Left lung (tissue), 14 donors: ENCODE measurements at regions of chr7 and their contacts with region 1.

Region 1: DNA sequence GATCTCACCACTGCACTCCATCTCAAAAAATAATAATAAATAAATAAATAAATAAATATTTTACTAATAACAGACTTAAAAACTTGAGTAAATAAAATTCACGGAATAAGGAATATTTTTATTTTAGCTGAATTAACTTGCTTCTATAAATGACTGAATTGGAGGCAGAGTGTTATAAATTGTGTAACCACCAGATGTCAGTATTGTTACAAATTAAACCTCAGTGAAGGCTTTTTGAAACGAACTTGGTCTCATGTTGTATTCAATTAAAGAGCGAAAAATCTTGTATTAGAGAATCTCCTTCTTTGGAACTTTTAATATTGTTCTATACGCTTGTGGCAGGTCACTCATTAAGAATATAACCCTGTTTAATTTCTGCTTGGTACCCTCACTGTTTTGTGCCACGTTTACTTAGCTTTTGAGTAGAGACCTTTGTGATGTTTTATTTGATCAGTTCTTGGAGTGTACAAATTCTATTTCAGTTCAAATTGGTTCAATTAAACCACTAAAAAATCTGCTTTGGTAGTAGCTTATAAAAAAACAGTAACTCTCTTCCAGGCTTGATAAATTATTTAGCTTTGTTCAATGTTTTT is 45.6 kb upstream of the SCIN start:
- DNase-seq: peak in 2 of 4 donors; percentile 35 to 48
- ATAC-seq: peak; percentile 68
- H3K4me3 ChIP-seq: no peak overlapping the region
- H3K27ac ChIP-seq: no peak overlapping the region
- H3K4me1 ChIP-seq: no peaks in the 10 kb centered on the region
- H3K27me3 ChIP-seq: no peaks in the 10 kb centered on the region
- CTCF ChIP-seq: peak; percentile 62

Region 2: DNA sequence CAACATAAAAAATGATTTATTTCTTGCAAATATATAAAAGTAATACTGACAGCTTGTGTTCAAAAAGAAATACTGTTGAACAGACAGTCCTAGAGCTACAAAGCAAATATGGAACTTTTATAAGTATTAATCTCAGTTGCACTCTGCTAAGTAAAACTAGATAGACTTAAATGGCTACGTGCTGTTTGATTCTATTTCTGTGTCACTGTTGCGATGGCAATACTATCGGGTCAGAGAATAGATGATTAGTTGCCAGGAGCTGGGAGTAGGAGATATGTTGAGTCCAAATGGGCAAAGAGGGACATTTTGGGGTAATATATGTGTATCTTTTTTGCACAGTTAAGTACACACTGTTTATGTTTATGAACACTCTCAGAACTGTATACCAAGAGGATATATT is 80.1 kb before region 1 on chr7:
- intact Hi-C with region 1: no loop called
- DNase-seq: no peak
- ATAC-seq: no peak
- H3K4me3 ChIP-seq: no peak overlapping the region
- H3K27ac ChIP-seq: no peak overlapping the region
- H3K4me1 ChIP-seq: no peaks in the 10 kb centered on the region
- H3K27me3 ChIP-seq: no peaks in the 10 kb centered on the region
- CTCF ChIP-seq: no peak

Region 3: DNA sequence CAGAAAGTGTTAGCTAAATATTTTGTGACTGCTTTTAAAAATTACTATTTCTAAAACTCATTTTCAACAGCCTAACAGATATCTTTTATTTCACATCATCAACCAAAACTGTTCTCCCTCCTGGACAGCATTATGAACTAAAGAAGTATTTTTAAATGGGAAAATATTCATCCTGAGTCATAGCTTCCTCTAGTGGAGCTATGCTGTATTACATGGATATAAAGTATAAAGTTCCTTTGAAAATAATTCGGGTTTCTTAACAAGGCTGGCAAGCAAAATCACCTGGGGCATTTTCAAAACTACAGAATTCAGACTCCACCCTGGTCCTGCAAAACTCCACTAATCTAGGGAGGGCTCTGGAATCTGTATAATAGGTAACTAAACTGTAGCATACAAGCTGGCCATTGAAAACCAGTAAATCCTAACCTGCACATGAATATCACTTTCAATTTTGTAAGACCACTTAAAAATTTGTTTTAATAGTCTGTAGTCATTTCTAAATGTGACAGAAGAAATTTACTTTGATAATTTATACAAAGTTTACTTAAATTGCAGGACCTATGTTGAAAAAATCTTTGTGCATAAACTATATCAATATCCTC is 99.1 kb after region 1 on chr7:
- intact Hi-C with region 1: loop called in 1 of 2 experiments (anchors 10 kb)
- DNase-seq: peak in 1 of 4 donors; percentile 18
- ATAC-seq: peak; percentile 83
- H3K4me3 ChIP-seq: no peak overlapping the region
- H3K27ac ChIP-seq: no peak overlapping the region
- H3K4me1 ChIP-seq: no peaks in the 10 kb centered on the region
- H3K27me3 ChIP-seq: no peaks in the 10 kb centered on the region
- CTCF ChIP-seq: peak; percentile 50 to 81

Region 4: GRCh38 chr7:13262929-13263530 is 738.1 kb after region 1 on chr7:
- intact Hi-C with region 1: loop called in 1 of 2 experiments (anchors 10 kb)
- DNase-seq: peak in 2 of 4 donors; percentile 18 to 55
- ATAC-seq: peak; percentile 70
- H3K4me3 ChIP-seq: no peak overlapping the region
- H3K27ac ChIP-seq: no peak overlapping the region
- H3K4me1 ChIP-seq: no peaks in the 10 kb centered on the region
- H3K27me3 ChIP-seq: no peaks in the 10 kb centered on the region
- CTCF ChIP-seq: peak; percentile 19 to 46